Right ventricle myocardium inferior (tissue), 1 donor: ENCODE measurements at regions of chr15 and their contacts with region 1.

Region 1: GRCh38 chr15:38453971-38454695 is at the start of gene FAM98B:
- DNase-seq: peak; percentile 92
- ATAC-seq: peak; percentile 97
- total RNA-seq, gene FAM98B: 20.5 TPM

Region 2: DNA sequence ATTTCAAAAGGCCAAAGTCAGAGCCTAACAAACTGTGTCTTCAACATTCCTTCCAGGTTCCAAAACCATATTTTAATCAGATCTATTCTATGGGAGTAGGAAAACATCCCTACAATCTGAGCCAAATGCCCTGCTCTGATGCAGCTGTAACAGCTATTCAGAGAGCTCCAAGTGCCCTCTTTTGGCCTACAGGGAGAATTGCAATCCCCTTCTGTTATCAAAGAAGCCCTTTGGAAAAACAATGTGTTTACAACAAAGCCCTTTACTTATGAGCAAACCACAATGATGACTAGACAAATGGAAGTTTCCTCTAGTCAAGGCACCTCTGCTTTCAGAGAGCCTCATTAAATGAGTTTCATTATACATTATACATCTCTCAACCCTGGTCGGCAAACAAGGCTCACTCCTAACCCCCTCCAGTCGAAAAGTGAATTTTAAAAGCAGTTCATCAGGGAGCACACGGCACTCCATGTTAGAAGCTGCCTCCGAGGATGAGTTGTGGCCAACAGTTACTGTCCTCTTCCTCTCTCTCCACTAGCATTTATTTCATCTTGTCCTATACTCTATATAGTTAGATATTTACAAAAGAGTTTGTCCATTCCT is 562.3 kb before region 1 on chr15:
- intact Hi-C with region 1: no loop called
- DNase-seq: no peak
- ATAC-seq: no peak

Region 3: GRCh38 chr15:38688761-38689160 is 234.6 kb after region 1 on chr15:
- intact Hi-C with region 1: loop called (anchors 5 kb)
- DNase-seq: no peak
- ATAC-seq: no peak

Region 4: GRCh38 chr15:38782156-38782555 is 328.0 kb after region 1 on chr15:
- intact Hi-C with region 1: no loop called
- DNase-seq: no peak
- ATAC-seq: no peak